ENCODE measurements at regions of chr17 and their contacts with region 1.

Region 1: DNA sequence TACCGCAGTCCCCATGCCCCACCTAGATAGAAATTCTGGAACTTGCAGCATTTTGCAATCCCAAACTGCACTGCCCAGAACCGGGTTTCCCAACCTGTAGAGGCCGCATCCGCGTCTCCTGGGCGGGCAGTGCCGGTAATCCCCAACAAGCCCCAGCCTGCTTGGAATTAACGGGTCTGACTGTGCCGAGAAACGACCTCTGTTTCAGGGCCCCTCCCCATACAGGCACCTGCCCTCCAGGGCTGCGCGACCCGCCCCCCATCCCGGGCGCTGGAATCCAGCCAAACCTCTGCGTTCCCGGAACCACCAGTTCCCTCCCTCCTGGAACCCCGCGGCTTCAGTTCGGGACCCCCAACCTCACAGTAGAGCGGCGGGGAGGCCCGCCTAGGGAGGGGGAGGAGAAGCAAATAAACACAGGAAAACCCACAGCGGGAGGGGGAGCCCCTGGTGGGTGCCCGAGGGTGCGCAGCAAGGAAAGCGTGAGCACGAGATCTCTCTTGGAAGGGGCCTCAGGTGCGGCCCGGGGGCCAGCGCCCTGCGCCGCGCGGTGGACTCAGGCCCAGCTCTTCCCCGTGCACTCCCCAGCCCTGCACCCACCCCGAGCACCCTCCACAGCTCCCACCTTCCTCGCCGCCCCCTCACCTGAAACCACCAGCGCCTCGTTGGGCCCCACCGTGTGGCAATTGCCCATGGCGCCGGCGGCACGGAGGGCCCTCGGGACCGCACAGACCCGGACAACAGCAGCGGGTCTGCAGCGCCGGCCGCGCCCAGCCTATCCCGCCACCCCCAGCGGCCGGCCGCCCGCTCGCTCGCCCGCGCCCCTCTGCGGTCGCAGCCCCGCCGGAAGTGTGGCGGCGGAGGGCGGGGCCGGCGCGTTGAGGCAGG is at the start of gene FLOT2:
- DNase-seq: no peak
- H3K4me3 ChIP-seq: peak within 1 kb of the TSS; percentile 85
- CTCF ChIP-seq: peak; percentile 46

Region 2: DNA sequence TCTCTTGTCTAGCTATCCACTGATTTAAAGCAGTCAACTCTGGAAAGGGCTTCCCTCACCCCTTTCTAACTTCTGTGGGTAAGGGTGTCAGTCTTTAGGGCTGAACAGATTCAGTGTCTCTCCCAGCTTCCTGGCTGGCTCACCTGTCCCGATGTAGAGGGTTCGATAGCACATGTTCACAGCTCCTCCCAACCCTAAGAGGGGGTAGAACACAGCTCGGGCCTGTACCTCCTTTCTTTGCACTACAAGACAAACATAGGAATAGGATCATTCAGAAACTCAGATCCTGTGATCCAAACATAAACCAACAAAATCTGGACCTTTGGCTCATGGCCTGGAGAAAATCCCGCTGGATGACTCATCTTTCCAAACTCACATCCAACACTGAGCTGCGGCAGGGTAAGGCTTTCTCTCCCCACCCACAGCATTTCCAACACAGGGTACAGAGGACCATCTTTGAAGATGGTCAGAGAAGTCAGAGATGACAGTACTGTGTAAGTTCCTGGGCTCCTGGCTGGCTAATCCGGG is 11.6 kb after region 1 on chr17:
- CTCF ChIA-PET with region 1: interaction called, 35 read pairs
- POLR2A ChIA-PET with region 1: no interaction called
- DNase-seq: no peak
- H3K4me3 ChIP-seq: no peak overlapping the region
- CTCF ChIP-seq: no peak

Region 3: DNA sequence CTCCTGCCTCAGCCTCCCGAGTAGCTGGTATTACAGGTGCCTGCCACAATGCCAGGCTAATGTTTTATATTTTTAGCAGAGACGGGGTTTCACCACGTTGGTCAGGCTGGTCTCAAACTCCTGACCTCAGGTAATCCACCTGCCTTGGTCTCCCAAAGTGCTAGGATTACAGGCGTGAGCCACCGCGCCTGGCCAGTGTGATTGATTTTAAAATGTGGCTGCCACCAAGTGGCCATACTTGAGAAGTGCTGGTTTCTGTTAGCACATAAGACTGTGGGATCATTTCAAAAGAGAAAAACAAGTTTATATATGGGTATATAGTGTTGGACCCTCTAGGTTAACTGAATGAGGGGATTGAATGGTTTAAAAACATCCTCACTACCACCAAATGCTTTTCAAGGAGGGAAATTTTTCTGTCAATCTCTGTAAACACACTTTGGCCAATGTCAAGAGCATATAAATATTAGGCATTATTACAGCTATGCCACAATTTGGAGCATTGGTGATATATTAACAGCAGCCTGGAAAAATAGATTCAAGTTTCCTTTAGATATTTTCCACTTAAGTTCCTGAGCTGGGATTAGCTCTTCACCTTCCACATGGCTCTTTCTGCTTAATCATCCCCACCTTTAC is 19.3 kb after region 1 on chr17:
- CTCF ChIA-PET with region 1: interaction called, 35 read pairs
- POLR2A ChIA-PET with region 1: no interaction called
- DNase-seq: no peak
- H3K4me3 ChIP-seq: no peak overlapping the region
- CTCF ChIP-seq: peak; percentile 44

Region 4: GRCh38 chr17:29005936-29006511 is 108.9 kb after region 1 on chr17 and contains the start of gene SEZ6:
- CTCF ChIA-PET with region 1: no interaction called
- POLR2A ChIA-PET with region 1: no interaction called
- DNase-seq: no peak
- H3K4me3 ChIP-seq: no peak within 1 kb of the TSS
- CTCF ChIP-seq: no peak

Measured in AG04449 (cell line).